Mammary epithelial cell (primary cell): ENCODE measurements at regions of chr4 and their contacts with region 1.

Region 1: GRCh38 chr4:139279760-139280620 is at the start of gene MGARP:
- DNase-seq: peak; percentile 33
- H3K4me3 ChIP-seq: peak within 1 kb of the TSS; percentile 46 to 63 (median 48)
- H3K27ac ChIP-seq: no peak within 1 kb of the TSS
- H3K4me1 ChIP-seq: peaks cover 3% of the 10 kb centered on the region
- H3K27me3 ChIP-seq: no peaks in the 10 kb centered on the region
- CTCF ChIP-seq: no peak
- total RNA-seq, gene MGARP: 4.7 to 5.5 TPM

Region 2: GRCh38 chr4:139030614-139031235 is 249.3 kb before region 1 on chr4:
- CTCF ChIA-PET with region 1: interaction called, 4 read pairs
- dilution Hi-C with region 1: no loop called
- in situ Hi-C with region 1: no loop called
- intact Hi-C with region 1: loop called (anchors 5 kb)
- DNase-seq: peak; percentile 66
- H3K4me3 ChIP-seq: no peak overlapping the region
- H3K27ac ChIP-seq: no peak overlapping the region
- H3K4me1 ChIP-seq: no peaks in the 10 kb centered on the region
- H3K27me3 ChIP-seq: no peaks in the 10 kb centered on the region
- CTCF ChIP-seq: peak; percentile 82 to 93

Region 3: GRCh38 chr4:139115226-139115625 is 164.8 kb before region 1 on chr4:
- CTCF ChIA-PET with region 1: no interaction called
- dilution Hi-C with region 1: no loop called
- in situ Hi-C with region 1: no loop called
- intact Hi-C with region 1: no loop called
- DNase-seq: no peak
- H3K4me3 ChIP-seq: no peak overlapping the region
- H3K27ac ChIP-seq: no peak overlapping the region
- H3K4me1 ChIP-seq: no peaks in the 10 kb centered on the region
- H3K27me3 ChIP-seq: no peaks in the 10 kb centered on the region
- CTCF ChIP-seq: no peak